Breast epithelium (tissue), 4 donors: ENCODE measurements at regions of chr5 and their contacts with region 1.

Region 1: DNA sequence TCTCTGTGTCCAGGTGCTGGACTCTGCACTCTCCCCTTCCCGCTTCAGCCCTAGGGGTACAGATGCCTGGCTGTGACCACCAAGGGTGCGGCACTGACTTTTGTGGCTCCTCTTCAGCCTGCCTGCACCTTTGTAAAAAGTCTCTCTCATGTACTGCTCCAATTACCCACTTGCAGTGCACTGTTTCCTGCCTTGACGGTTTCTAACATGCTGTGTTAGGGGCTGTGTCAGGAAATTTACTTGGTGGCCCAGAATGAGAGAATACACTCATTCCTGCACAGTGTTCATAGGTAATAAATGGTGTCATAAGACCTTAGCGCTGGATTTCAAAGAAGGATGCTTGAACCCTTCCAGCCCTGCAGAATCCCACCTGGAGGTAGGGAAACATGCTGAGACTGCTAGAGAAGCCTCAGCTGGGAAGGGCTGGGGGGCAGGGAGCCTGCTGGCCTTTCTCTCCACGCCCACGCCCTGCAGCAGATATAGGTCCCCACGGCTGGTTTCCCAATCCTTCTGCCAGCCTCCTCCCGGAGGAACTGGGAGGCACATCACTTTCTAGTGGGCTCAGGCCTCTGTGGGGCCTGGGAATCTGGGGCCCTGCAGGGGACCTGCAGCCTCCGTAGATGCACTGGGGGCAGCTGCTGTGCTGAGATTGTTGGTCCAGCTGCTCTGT is 17.6 kb upstream of the HRH2 start:
- DNase-seq: no peak
- H3K4me3 ChIP-seq: no peak overlapping the region
- H3K27ac ChIP-seq: no peak overlapping the region
- H3K4me1 ChIP-seq: no peaks in the 10 kb centered on the region
- H3K27me3 ChIP-seq: no peaks in the 10 kb centered on the region
- CTCF ChIP-seq: no peak
- POLR2A ChIP-seq: no peak

Region 2: GRCh38 chr5:174724491-174725260 is 915.6 kb before region 1 on chr5 and contains the start of gene MSX2:
- intact Hi-C with region 1: loop called (anchors 5 kb)
- DNase-seq: peak; percentile 85 to 94
- H3K4me3 ChIP-seq: peak within 1 kb of the TSS; percentile 65 to 89 (median 76)
- H3K27ac ChIP-seq: peak within 1 kb of the TSS; percentile 84 to 92
- H3K4me1 ChIP-seq: no peaks in the 10 kb centered on the region
- H3K27me3 ChIP-seq: peaks cover 0 to 33% of the 10 kb centered on the region in 2 donors
- CTCF ChIP-seq: no peak
- POLR2A ChIP-seq: peak; percentile 51
- total RNA-seq, gene MSX2: 1.6 to 12.7 (median 11.5) TPM